B cell (primary cell): ENCODE measurements at regions of chr5 and their contacts with region 1.

Region 1: DNA sequence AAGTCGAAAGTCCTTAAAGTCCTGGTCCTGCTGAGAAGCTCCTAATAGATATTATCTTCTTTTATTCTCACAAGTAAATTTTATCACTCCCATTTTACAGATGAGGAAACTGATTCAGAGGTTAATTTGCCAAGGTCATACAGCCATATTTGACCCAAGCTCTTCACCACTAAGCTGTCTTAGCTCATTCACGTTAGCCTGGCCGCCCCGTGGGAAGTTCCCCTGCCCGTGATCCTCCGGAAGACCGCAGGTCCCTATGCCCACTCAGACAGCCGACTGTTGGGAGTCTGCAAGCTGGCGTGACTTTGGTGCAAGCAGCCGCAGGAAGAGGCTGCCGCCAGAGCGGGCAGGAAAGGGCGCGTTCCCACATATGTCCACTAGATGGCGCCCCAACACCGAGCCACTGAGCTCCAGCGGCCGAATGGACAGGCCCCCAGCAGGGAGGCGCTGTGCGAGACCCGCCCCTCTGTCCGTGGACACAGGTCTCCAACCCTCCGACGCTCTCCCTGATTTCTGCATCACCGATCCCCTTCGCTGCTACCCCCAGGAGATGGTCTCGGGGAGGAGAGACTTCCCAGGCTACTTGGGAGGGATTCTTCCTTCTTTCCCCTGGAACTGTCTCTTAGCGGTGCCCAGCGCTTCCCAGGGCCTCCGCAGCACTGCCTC is 10.0 kb upstream of the ARAP3 start:
- DNase-seq: peak; percentile 86
- ATAC-seq: peak; percentile 95
- H3K4me3 ChIP-seq: peak overlapping the region in 4 of 5 experiments; percentile 3 to 57 (median 33)
- H3K4me3 Mint-ChIP-seq: peak overlapping the region; percentile 44
- H3K27ac ChIP-seq: no peak overlapping the region
- H3K27ac Mint-ChIP-seq: no peak overlapping the region
- H3K4me1 ChIP-seq: peaks cover 8% of the 10 kb centered on the region in 2 donors
- H3K4me1 Mint-ChIP-seq: peaks cover 7% of the 10 kb centered on the region
- H3K27me3 ChIP-seq: peaks cover 0 to 47% (median 7%) of the 10 kb centered on the region in 4 experiments
- H3K27me3 Mint-ChIP-seq: peaks cover 68% of the 10 kb centered on the region
- CTCF ChIP-seq: peak; percentile 98

Region 2: DNA sequence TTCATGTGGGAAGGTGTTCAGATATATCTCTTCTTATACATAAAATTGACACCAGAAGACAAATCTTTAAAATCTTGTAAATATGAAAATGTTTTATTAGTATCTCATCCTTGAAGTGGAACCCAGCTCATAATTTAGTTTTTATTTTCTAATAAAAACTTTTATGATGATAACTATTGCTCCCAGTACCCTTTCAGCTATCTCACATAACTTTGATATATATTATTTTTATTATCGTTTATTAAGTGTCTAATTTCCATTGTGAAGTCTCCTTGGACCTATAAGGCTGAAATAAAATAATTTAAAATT is 430.8 kb before region 1 on chr5:
- CTCF ChIA-PET with region 1: no interaction called
- POLR2A ChIA-PET with region 1: no interaction called
- intact Hi-C with region 1: no loop called
- DNase-seq: no peak
- ATAC-seq: no peak
- H3K4me3 ChIP-seq: no peak overlapping the region
- H3K4me3 Mint-ChIP-seq: no peak overlapping the region
- H3K27ac ChIP-seq: no peak overlapping the region
- H3K27ac Mint-ChIP-seq: no peak overlapping the region
- H3K4me1 ChIP-seq: no peaks in the 10 kb centered on the region
- H3K4me1 Mint-ChIP-seq: no peaks in the 10 kb centered on the region
- H3K27me3 ChIP-seq: no peaks in the 10 kb centered on the region
- H3K27me3 Mint-ChIP-seq: no peaks in the 10 kb centered on the region
- CTCF ChIP-seq: no peak

Region 3: DNA sequence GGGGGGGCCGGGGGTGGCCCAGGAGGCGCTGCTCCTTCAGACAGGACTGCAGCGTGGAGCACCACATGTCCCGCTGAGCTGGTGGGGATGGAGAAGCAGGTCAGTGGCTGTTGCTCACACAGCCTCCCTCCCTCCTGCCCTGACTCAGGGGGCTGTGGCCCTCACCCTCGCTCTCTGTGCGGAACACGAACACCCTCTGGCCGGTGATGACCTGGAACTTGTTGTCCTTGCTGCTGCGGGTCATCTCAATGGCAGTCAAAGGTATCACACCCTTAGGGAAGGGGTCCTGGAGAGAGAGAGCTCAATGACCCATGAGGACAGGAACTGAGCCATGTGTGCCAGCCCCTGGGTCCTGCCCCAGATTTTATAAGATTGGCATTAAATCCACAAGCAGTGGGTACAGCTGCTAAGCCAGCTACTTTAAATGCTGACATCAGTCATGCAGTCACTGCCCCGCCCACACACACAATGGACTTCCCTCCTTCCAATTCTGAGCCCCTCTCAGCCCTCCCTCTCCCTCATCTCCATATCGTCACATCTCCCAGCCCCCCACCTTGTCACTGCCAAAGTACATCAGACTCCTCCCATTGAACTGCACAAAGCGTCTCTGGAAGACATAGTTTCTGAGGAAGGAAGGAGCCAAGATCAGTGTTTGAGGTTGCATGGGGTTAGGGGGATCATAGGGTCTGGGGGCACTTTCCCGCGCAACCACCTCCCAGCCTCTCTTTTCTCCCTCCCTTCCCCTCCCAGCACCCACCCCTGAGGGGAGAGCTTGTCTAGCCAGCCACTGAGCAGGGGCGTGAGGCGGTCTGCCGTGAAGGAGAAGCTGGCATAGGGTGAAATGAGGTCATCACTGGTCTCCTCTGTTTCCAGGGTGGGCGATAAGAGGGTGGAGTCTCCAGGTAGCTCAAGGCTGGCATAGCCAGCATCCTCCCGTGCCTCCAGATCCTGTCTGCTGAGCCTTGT is 18.9 kb before region 1 on chr5:
- CTCF ChIA-PET with region 1: interaction called, 28 read pairs
- POLR2A ChIA-PET with region 1: no interaction called
- intact Hi-C with region 1: no loop called
- DNase-seq: no peak
- ATAC-seq: no peak
- H3K4me3 ChIP-seq: no peak overlapping the region
- H3K4me3 Mint-ChIP-seq: no peak overlapping the region
- H3K27ac ChIP-seq: no peak overlapping the region
- H3K27ac Mint-ChIP-seq: no peak overlapping the region
- H3K4me1 ChIP-seq: no peaks in the 10 kb centered on the region
- H3K4me1 Mint-ChIP-seq: no peaks in the 10 kb centered on the region
- H3K27me3 ChIP-seq: no peaks in the 10 kb centered on the region
- H3K27me3 Mint-ChIP-seq: peaks cover 5% of the 10 kb centered on the region
- CTCF ChIP-seq: no peak

Region 4: GRCh38 chr5:141681695-141682641 is 10.0 kb before region 1 on chr5 and contains the start of gene ARAP3:
- CTCF ChIA-PET with region 1: interaction called, 31 read pairs
- POLR2A ChIA-PET with region 1: interaction called, 4 read pairs
- intact Hi-C with region 1: no loop called
- DNase-seq: peak; percentile 54
- ATAC-seq: peak; percentile 74
- H3K4me3 ChIP-seq: peak within 1 kb of the TSS; percentile 41 to 76 (median 58)
- H3K4me3 Mint-ChIP-seq: peak within 1 kb of the TSS; percentile 89
- H3K27ac ChIP-seq: no peak within 1 kb of the TSS
- H3K27ac Mint-ChIP-seq: peak within 1 kb of the TSS; percentile 78
- H3K4me1 ChIP-seq: peaks cover 20 to 23% of the 10 kb centered on the region in 2 donors
- H3K4me1 Mint-ChIP-seq: peaks cover 20% of the 10 kb centered on the region
- H3K27me3 ChIP-seq: peaks cover 0 to 19% (median 0%) of the 10 kb centered on the region in 4 experiments
- H3K27me3 Mint-ChIP-seq: peaks cover 5% of the 10 kb centered on the region
- CTCF ChIP-seq: no peak
- total RNA-seq, gene ARAP3: 3.0 and 3.7 TPM in 2 replicates

Region 5: GRCh38 chr5:141740885-141741284 is 48.9 kb after region 1 on chr5:
- CTCF ChIA-PET with region 1: no interaction called
- POLR2A ChIA-PET with region 1: no interaction called
- intact Hi-C with region 1: no loop called
- DNase-seq: no peak
- ATAC-seq: no peak
- H3K4me3 ChIP-seq: no peak overlapping the region
- H3K4me3 Mint-ChIP-seq: no peak overlapping the region
- H3K27ac ChIP-seq: no peak overlapping the region
- H3K27ac Mint-ChIP-seq: no peak overlapping the region
- H3K4me1 ChIP-seq: no peaks in the 10 kb centered on the region
- H3K4me1 Mint-ChIP-seq: no peaks in the 10 kb centered on the region
- H3K27me3 ChIP-seq: peaks cover 0 to 49% (median 7%) of the 10 kb centered on the region in 4 experiments
- H3K27me3 Mint-ChIP-seq: peaks cover 67% of the 10 kb centered on the region
- CTCF ChIP-seq: no peak

Region 6: DNA sequence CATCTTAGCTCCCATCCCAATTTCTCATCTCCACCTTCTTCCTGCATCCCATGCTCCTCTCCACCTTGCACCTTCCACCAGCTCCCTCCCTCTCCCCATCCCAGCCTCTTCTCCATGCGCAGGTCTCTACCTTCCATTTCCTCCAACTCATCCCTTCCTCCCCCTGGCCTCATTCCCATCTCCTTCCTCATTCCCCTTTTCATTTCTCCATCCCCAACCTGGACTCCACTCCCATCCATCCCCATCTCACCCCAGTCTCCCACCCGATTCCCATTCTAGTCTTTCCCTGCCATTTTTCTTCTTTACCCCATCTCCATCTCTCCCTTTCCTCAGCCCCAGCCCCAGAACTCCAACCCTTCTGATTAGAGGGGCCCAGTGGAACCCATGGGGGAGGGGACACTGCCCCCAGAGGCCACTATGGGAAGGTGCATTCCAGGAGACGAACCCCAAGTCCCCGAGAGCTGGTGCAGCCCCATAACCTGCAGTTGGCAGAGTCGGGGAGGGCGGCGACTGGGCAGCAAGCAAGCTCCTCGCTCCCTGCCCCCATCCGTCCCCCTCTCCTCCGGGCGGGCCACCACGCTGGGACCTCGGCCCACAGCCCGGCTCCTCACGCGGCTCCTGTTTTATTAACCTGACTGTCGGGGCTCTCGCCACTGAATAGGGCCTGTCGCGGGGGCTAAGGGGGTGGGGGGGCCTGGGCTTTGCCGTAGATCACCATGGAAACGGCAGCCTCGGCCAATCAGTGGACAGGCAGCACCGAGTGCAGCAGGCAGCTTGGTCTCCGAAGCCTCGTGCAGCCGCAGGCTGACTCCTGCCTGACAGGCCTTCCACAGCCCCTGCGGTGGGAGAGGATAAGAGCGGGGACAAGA is 119.5 kb after region 1 on chr5:
- CTCF ChIA-PET with region 1: interaction called, 10 read pairs
- POLR2A ChIA-PET with region 1: no interaction called
- intact Hi-C with region 1: no loop called
- DNase-seq: peak; percentile 48
- ATAC-seq: peak; percentile 67
- H3K4me3 ChIP-seq: no peak overlapping the region
- H3K4me3 Mint-ChIP-seq: no peak overlapping the region
- H3K27ac ChIP-seq: no peak overlapping the region
- H3K27ac Mint-ChIP-seq: no peak overlapping the region
- H3K4me1 ChIP-seq: no peaks in the 10 kb centered on the region
- H3K4me1 Mint-ChIP-seq: no peaks in the 10 kb centered on the region
- H3K27me3 ChIP-seq: peaks cover 0 to 36% (median 9%) of the 10 kb centered on the region in 4 experiments
- H3K27me3 Mint-ChIP-seq: peaks cover 65% of the 10 kb centered on the region
- CTCF ChIP-seq: peak; percentile 72

Region 7: DNA sequence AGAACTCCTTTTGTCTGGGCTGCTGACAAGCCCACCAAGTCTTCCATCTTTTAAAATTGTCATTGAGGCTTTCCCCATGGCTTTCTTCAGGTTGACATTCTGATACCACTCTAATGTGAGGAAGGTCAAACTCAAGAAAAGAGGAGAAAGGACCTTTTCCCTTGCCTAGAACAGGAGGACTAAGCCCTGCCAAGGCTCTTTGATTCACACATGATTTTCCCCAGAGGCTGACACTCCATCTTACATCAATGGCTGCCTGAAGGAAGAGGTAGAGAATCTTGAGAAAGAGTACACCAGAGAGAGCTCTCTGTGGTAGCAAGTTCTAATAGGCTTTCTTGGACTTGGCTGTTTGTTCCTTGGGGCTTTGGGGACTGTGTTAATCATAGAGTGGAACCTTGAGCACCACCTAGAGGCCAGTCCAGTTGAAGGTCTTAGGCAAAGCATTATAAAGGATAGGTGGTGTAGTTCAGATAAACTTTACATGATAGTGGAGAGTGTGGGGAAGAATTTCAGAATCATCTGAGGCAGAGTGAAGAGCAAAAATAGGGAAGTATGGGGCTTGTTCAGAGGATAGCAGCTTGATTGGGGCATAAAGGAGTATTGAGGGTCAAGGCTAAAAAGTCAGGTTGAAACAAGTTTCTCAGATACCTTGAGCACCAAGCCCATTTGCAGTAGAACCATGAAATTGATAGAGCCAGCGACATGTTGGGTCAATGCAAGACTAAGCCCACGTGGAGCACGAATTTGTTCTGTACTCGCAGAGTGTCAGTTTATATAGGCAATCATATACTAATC is 453.3 kb after region 1 on chr5:
- CTCF ChIA-PET with region 1: interaction called, 32 read pairs
- POLR2A ChIA-PET with region 1: no interaction called
- intact Hi-C with region 1: loop called (anchors 1 kb)
- DNase-seq: peak; percentile 59
- ATAC-seq: peak; percentile 70
- H3K4me3 ChIP-seq: no peak overlapping the region
- H3K4me3 Mint-ChIP-seq: no peak overlapping the region
- H3K27ac ChIP-seq: no peak overlapping the region
- H3K27ac Mint-ChIP-seq: no peak overlapping the region
- H3K4me1 ChIP-seq: no peaks in the 10 kb centered on the region
- H3K4me1 Mint-ChIP-seq: no peaks in the 10 kb centered on the region
- H3K27me3 ChIP-seq: no peaks in the 10 kb centered on the region
- H3K27me3 Mint-ChIP-seq: no peaks in the 10 kb centered on the region
- CTCF ChIP-seq: peak; percentile 74